ENCODE measurements at regions of chr19 and their contacts with region 1.

Region 1: GRCh38 chr19:53612755-53613154 is 19.0 kb upstream of the DPRX start:
- DNase-seq: no peak
- H3K4me3 ChIP-seq: no peak overlapping the region
- H3K27ac ChIP-seq: no peak overlapping the region
- H3K4me1 ChIP-seq: no peaks in the 10 kb centered on the region
- H3K27me3 ChIP-seq: no peaks in the 10 kb centered on the region
- CTCF ChIP-seq: no peak
- EP300 ChIP-seq: no peak
- POLR2A ChIP-seq: no peak

Region 2: DNA sequence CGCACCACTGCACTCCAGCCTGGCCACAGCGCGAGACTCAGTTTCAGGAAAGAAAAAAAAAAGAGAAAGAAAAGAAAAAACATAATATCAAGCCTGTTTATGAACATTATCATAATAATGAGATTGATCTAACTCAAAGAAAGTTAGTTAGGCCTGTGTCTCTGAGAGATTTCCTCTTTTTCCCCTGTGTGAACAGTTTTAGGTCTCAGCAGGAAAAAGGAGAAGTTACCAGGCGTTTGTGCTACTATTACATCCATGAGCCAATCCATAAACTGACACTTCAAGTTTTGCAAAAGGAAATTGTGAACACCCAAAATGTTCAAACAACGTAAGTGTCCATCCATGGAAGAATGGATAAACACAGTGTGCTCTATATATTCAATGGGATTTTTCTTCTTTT is 464.6 kb after region 1 on chr19:
- intact Hi-C with region 1: no loop called
- DNase-seq: no peak
- H3K4me3 ChIP-seq: no peak overlapping the region
- H3K27ac ChIP-seq: no peak overlapping the region
- H3K4me1 ChIP-seq: no peaks in the 10 kb centered on the region
- H3K27me3 ChIP-seq: no peaks in the 10 kb centered on the region
- CTCF ChIP-seq: no peak
- EP300 ChIP-seq: no peak
- POLR2A ChIP-seq: no peak

Region 3: DNA sequence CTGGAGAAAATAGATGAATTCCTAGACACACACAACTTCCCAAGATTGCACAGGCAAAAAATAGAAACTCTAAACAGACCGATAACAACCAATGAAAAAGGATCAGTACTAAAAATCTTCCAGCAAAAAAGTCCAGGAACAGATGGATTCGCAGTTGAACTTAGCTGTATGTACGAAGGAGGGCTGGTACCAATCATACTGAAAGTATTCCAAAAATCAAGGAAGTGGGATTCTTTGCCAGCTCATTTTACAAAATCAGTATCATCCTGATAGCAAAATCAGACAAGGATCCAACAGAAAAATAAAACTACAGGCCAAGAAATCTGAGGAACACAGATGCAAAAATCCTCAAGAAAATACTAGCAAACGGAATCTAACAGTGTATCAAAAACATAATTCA is 674.7 kb after region 1 on chr19:
- intact Hi-C with region 1: loop called in 1 of 4 experiments (anchors 5 kb)
- DNase-seq: no peak
- H3K4me3 ChIP-seq: no peak overlapping the region
- H3K27ac ChIP-seq: no peak overlapping the region
- H3K4me1 ChIP-seq: no peaks in the 10 kb centered on the region
- H3K27me3 ChIP-seq: no peaks in the 10 kb centered on the region
- CTCF ChIP-seq: no peak
- EP300 ChIP-seq: no peak
- POLR2A ChIP-seq: no peak